B cell (primary cell): ENCODE measurements at regions of chr11 and their contacts with region 1.

Region 1: DNA sequence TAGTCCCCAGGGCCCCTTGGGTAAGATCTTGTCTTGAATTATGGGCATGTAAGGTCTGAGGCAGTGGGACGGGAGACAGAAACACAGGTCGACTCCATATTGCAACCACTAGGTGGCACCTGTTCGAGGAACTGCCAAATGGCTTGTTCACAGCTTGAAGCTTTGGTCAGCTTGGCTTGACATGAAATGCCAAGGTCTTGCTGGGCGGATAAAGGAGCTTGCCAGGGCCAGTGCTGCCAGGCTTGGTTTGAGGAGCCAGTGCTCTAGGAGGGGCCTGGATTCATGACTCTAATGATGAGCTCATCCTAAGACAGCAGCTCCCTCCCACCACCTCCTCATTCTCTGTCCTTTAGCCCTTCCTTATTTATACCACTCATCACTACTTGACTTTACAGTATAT is 11.9 kb upstream of the NRIP3 start:
- DNase-seq: peak; percentile 73
- ATAC-seq: peak; percentile 76
- H3K4me3 ChIP-seq: no peak overlapping the region
- H3K4me3 Mint-ChIP-seq: no peak overlapping the region
- H3K27ac ChIP-seq: no peak overlapping the region
- H3K27ac Mint-ChIP-seq: no peak overlapping the region
- H3K4me1 ChIP-seq: no peaks in the 10 kb centered on the region
- H3K4me1 Mint-ChIP-seq: no peaks in the 10 kb centered on the region
- H3K27me3 ChIP-seq: peaks cover 0 to 6% (median 4%) of the 10 kb centered on the region in 4 experiments
- H3K27me3 Mint-ChIP-seq: peaks cover 22% of the 10 kb centered on the region
- CTCF ChIP-seq: peak; percentile 92

Region 2: DNA sequence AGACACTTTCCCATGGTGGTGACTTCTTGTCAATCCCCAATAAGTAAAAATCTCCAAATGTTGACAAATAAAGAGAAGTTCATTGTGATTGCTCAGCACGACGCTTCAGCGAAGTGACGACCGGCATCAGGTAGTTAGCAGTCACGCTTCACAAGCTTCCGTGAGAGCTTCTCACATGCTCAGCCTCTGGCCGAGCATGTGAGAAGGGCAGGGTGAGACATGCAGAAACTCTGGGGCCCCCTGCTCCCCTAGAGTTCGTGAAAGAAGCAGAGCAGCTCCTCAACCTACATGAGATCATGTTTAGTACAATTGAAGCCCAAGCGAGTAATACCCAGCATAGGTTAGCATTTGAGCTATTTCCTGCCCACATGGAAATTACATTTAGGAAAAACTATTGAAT is 78.5 kb before region 1 on chr11:
- CTCF ChIA-PET with region 1: no interaction called
- POLR2A ChIA-PET with region 1: no interaction called
- intact Hi-C with region 1: no loop called
- DNase-seq: peak; percentile 17
- ATAC-seq: no peak
- H3K4me3 ChIP-seq: no peak overlapping the region
- H3K4me3 Mint-ChIP-seq: peak overlapping the region; percentile 14
- H3K27ac ChIP-seq: no peak overlapping the region
- H3K27ac Mint-ChIP-seq: no peak overlapping the region
- H3K4me1 ChIP-seq: no peaks in the 10 kb centered on the region
- H3K4me1 Mint-ChIP-seq: peaks cover 3% of the 10 kb centered on the region
- H3K27me3 ChIP-seq: no peaks in the 10 kb centered on the region
- H3K27me3 Mint-ChIP-seq: peaks cover 9% of the 10 kb centered on the region
- CTCF ChIP-seq: no peak

Region 3: GRCh38 chr11:9003573-9004309 is 11.9 kb before region 1 on chr11 and contains the start of gene NRIP3:
- CTCF ChIA-PET with region 1: interaction called, 17 read pairs
- POLR2A ChIA-PET with region 1: no interaction called
- intact Hi-C with region 1: no loop called
- DNase-seq: peak; percentile 85
- ATAC-seq: peak; percentile 86
- H3K4me3 ChIP-seq: peak within 1 kb of the TSS; percentile 23 to 60 (median 54)
- H3K4me3 Mint-ChIP-seq: peak within 1 kb of the TSS; percentile 87
- H3K27ac ChIP-seq: no peak within 1 kb of the TSS
- H3K27ac Mint-ChIP-seq: no peak within 1 kb of the TSS
- H3K4me1 ChIP-seq: peaks cover 18 to 19% of the 10 kb centered on the region in 2 donors
- H3K4me1 Mint-ChIP-seq: peaks cover 16% of the 10 kb centered on the region
- H3K27me3 ChIP-seq: peaks cover 2 to 60% (median 46%) of the 10 kb centered on the region in 4 experiments
- H3K27me3 Mint-ChIP-seq: peaks cover 50% of the 10 kb centered on the region
- CTCF ChIP-seq: no peak
- total RNA-seq, gene NRIP3: 0.56 and 0.59 TPM in 2 replicates

Region 4: DNA sequence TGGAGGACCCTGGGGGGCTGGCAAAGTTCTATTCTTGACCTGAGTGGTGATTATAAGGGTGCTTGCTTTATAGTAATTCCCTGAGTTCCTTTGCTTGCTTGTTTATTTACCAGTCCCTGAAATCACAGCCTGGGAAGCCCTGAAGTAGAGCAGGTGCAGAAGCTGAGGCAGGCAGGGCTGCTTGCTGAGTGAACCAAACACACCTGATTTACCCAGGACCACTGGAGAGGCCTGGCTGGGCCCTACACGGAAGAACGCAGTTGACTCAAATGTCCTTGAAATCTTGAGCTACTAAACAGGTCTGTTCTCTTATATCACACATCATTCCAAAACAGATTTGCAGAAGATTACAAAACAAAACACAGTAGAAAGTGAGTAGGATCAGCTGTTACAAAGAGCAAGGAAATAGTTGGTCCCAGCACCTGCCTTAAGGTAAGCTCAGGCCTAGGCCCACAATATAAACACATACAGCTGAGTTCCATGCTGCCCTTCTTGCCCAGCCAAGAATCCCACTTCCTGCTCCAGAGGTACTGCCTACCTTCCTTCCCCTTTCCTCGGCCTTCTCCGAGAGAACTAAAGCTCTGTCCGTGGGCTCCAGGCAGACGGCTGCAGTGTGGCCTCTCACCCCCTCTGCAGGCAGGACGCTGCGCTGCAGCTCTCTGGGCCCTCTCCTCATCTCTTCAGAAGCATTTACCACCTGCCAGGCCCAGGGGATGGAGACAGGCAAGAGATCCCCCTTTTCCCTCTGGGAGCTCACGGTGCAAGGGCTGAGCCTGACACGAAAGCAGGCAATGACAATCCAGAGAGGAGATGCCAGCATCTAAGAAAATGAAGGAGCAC is 121.8 kb after region 1 on chr11:
- CTCF ChIA-PET with region 1: interaction called, 43 read pairs
- POLR2A ChIA-PET with region 1: no interaction called
- intact Hi-C with region 1: loop called (anchors 1 kb)
- DNase-seq: peak; percentile 68
- ATAC-seq: peak; percentile 86
- H3K4me3 ChIP-seq: no peak overlapping the region
- H3K4me3 Mint-ChIP-seq: no peak overlapping the region
- H3K27ac ChIP-seq: no peak overlapping the region
- H3K27ac Mint-ChIP-seq: no peak overlapping the region
- H3K4me1 ChIP-seq: no peaks in the 10 kb centered on the region
- H3K4me1 Mint-ChIP-seq: peaks cover 3% of the 10 kb centered on the region
- H3K27me3 ChIP-seq: no peaks in the 10 kb centered on the region
- H3K27me3 Mint-ChIP-seq: no peaks in the 10 kb centered on the region
- CTCF ChIP-seq: peak; percentile 94

Region 5: DNA sequence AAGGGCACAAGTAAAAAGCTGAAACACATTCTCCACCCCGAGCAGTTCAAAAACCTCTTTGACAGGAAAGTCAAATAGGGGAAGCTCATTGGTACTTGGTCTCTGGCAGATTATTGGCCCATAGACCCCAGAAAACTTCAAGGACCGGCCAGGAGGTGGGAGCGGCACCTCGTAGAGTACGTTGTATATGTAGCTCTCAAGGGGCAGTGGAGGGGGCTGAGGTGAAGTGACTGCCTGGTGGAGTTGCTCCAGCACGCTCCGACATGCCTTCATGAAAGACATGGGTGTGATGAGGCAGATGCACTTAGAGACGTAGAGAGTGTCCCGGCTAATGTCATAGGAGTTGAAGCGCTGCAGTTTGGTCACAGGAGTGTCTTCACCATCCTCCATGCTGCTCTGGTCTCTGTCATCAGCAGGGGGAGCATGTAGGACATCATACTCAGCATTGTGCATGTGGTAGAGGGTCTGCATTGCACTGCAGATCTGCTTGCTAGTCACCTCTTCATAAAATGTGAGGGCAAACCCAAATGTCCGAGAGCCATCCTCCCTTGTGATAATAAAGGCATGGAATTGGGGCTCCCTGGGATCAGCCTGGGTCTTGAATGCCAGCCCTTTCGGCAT is 188.1 kb after region 1 on chr11:
- CTCF ChIA-PET with region 1: no interaction called
- POLR2A ChIA-PET with region 1: no interaction called
- intact Hi-C with region 1: no loop called
- DNase-seq: peak; percentile 23
- ATAC-seq: no peak
- H3K4me3 ChIP-seq: no peak overlapping the region
- H3K4me3 Mint-ChIP-seq: no peak overlapping the region
- H3K27ac ChIP-seq: no peak overlapping the region
- H3K27ac Mint-ChIP-seq: no peak overlapping the region
- H3K4me1 ChIP-seq: no peaks in the 10 kb centered on the region
- H3K4me1 Mint-ChIP-seq: peaks cover 4% of the 10 kb centered on the region
- H3K27me3 ChIP-seq: no peaks in the 10 kb centered on the region
- H3K27me3 Mint-ChIP-seq: no peaks in the 10 kb centered on the region
- CTCF ChIP-seq: no peak

Region 6: DNA sequence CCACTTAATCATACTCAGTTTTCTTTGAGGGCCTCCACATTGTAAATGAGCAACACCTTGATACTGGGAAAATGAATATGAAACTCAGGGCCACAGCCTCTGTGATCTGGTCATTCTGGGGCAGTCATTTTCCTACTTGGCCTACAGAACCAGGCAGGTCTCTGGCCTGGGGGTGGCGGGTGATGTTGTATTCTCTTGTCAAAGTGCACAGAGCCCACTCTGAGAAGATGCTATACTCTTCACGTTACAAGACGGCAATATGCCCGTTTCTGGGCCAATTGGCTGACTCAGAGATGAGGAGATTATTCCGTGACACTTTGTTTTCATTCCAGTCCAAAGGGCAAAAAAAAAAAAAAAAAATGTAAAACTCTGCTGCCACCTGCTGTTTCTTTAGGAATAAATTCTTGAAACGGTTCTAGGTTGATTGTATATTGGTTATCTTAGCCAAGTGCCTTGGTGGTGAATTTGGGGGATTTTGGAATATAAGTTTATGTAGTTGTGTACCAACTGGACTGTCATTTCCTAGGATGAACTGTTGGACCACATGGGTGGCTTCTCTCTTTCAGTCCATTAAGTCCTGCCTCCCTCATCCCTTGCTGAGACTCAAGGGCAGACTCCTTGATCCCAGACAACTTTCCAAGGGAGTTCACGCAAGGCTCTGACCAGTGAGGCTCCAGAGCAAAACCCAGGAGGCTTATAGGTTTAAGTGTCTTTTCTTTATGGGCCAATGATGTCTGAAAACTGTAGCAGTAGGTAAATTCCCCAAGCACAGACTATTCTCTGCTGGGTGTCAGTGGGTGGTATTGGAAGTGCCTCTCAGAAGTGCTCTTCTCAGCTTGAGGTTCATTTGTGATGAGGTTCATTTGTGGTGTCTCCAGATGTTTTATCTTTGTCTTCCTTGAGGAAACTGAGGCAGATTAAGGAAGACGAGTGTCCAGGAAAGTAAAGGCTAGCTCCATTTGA is 1307.4 kb after region 1 on chr11:
- CTCF ChIA-PET with region 1: interaction called, 3 read pairs
- POLR2A ChIA-PET with region 1: no interaction called
- intact Hi-C with region 1: loop called (anchors 5 kb)
- DNase-seq: peak; percentile 70
- ATAC-seq: peak; percentile 44
- H3K4me3 ChIP-seq: no peak overlapping the region
- H3K4me3 Mint-ChIP-seq: no peak overlapping the region
- H3K27ac ChIP-seq: no peak overlapping the region
- H3K27ac Mint-ChIP-seq: peak overlapping the region; percentile 67
- H3K4me1 ChIP-seq: peaks cover 7 to 14% of the 10 kb centered on the region in 2 donors
- H3K4me1 Mint-ChIP-seq: peaks cover 17% of the 10 kb centered on the region
- H3K27me3 ChIP-seq: peaks cover 0 to 6% (median 0%) of the 10 kb centered on the region in 4 experiments
- H3K27me3 Mint-ChIP-seq: peaks cover 16% of the 10 kb centered on the region
- CTCF ChIP-seq: peak; percentile 76